Activated T-helper 2 cell treated with anti-CD3 and anti-CD28 coated beads, Interferon-gamma antibody, Interleukin-2, Interleukin-4, amounts not matched to agents 10 μg/mL and 5 μg/mL and 100 μg/mL, durations not matched to agents 14 hours and 24 hours and 36 hours (primary cell): ENCODE measurements at regions of chr6 and their contacts with region 1.

Region 1: DNA sequence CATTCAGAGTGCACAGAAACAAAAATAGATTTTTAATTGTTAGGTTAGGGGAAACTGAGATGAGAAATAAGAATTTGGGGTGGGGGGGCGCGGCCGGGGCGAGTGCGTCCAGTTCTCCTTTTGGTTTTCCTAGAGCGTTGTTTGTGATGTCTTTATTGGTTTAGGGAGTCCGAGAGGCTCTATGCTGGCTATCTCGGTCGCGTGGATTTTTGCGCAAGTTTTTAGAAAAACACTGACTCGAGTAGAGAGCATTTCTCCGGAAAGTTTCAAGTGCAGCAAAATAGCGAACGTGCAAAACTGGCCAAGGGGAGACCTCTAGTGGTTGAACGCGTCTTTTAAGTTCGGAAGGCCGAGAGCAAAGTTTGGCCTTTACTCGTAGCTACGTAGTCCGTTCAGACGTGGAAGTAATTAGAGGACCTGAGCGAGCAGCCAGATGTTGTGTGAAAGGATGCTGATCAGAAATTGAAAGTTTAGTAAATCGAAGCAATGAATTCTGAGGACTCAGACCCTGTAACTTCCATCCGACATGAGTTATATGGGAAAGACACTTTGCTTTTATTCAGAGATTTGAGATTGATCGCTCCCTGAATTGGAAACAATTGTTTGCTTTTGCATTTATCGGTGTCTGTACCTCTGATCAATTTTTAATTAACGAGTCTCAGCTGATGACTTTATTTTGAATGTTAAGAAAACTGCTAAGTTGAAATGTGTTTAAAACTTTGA is 2.7 kb downstream of the L3MBTL3 start:
- DNase-seq: peak; percentile 72
- H3K4me3 Mint-ChIP-seq: peak overlapping the region; percentile 93
- H3K27ac Mint-ChIP-seq: peak overlapping the region; percentile 91
- H3K4me1 Mint-ChIP-seq: peaks cover 12% of the 10 kb centered on the region
- H3K27me3 Mint-ChIP-seq: peaks cover 14% of the 10 kb centered on the region

Region 2: DNA sequence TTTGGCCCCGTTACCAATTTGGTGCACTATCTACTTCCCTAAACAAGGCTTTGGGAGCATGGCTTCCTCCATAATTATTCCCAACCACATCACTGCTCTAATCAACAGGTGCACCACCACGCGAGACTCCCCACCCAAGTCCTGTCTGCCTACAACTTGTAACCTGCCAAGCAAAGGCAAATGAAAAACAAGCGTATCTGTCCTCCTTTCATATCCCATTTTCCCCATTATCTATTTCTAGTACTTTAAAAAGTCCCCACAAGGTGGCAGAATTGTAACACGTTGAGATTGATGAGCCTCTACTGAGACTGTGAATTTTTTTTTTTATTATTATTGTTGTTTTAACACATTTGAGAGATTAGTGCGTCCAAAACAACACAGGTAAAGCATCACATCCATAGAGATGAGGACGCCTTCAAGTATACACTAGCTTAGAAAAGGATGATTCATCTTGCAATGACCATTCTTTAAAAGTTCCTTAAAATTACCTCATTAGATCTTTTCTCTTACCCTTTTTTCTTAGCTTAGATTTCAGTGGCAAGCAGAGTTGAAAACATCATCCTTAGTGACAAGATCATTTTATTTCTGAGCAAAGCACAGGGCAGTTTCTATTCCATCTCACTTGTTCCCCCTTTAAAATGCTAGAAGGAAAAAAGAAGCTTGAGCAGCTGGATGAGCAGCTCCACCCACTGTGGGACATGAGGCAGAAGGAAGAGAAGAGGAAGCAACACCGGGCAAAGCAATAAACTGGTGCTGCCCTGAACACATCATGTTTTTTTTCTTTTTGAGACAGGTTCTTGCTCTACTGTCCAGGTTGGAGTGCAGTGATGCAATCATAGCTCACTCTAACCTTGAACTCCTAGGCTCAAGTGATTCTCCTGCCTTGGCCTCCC is 521.9 kb before region 1 on chr6:
- intact Hi-C with region 1: loop called (anchors 2 kb)
- DNase-seq: no peak
- H3K4me3 Mint-ChIP-seq: peak overlapping the region; percentile 36
- H3K27ac Mint-ChIP-seq: peak overlapping the region; percentile 0
- H3K4me1 Mint-ChIP-seq: peaks cover 48% of the 10 kb centered on the region
- H3K27me3 Mint-ChIP-seq: no peaks in the 10 kb centered on the region

Region 3: GRCh38 chr6:129730477-129731165 is 290.4 kb before region 1 on chr6:
- intact Hi-C with region 1: loop called (anchors 1 kb)
- DNase-seq: no peak
- H3K4me3 Mint-ChIP-seq: no peak overlapping the region
- H3K27ac Mint-ChIP-seq: peak overlapping the region; percentile 8
- H3K4me1 Mint-ChIP-seq: peaks cover 19% of the 10 kb centered on the region
- H3K27me3 Mint-ChIP-seq: no peaks in the 10 kb centered on the region

Region 4: DNA sequence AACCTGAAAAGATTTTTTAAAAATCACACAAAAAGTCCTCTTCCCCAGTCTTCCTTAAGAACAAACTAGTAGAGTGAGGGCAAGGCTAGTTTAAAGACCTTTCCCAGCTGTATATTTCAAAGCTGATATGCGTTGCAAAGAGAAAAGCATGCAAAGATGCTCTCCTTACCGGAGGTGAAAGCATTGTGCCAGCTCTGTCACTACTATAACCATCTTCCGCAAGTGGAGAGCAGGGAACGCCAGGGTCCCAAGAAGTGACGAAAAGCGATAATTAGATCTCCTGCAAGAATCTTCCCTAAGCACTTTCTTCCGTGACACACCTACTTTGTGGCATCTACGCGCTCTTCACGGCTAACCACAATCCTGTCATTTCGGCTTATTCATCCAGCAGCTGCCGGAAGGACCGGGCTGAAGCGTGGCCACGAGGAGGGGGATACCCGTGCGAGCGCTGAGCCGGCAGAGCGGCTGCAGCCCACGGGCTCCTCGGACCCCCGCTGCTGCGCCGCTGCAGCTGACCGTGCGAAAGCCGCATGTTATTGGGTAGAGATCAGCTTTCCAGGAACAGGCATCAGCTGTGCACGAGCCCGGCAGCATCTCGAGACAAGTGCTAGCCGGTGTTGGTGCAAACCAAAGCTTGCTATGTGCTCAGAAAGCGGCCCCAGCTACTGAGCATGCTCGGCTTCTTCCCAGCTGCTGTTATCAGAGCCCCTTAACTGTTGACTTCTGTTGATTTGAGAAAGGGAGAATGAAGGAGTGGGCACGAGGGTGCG is 253.9 kb before region 1 on chr6:
- intact Hi-C with region 1: loop called (anchors 5 kb)
- DNase-seq: peak; percentile 68
- H3K4me3 Mint-ChIP-seq: peak overlapping the region; percentile 81
- H3K27ac Mint-ChIP-seq: no peak overlapping the region
- H3K4me1 Mint-ChIP-seq: peaks cover 27% of the 10 kb centered on the region
- H3K27me3 Mint-ChIP-seq: peaks cover 64% of the 10 kb centered on the region

Region 5: DNA sequence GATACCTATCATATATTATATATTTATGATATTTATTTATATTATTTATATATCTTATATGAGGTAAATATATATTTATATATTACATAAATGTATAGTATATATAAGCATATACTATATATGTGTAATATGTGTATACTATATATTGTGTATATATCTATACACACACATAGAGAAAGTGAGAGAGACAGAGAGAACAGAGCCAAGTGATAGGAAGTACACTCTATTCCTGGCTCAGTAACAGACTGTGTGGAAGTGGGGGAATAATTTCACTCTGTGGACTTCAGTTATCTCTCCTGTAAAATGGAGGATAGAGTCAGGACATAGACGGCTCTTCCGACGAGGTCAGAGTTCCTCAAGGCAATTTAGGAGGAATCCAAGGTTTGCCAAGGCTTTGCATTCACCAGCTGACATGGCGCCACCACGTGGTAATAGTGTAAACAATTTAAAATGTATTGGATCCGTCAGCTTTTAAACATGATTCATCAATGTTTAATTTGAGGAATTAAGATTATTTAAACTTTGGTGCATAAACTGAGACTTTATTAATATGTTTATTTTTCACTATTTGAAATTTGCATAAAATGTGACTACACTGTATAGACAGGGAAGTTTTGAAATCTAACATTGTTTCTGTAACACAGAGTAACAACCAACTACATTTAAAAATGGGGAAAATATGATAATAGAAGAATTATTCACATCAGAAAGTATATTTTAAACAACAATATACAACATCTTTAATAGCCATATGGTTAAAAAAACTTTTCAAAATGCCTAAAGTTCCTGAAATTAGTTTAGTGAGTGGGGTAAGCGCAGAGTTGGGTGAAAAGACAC is 84.5 kb before region 1 on chr6:
- intact Hi-C with region 1: loop called (anchors 5 kb)
- DNase-seq: no peak
- H3K4me3 Mint-ChIP-seq: no peak overlapping the region
- H3K27ac Mint-ChIP-seq: no peak overlapping the region
- H3K4me1 Mint-ChIP-seq: peaks cover 2% of the 10 kb centered on the region
- H3K27me3 Mint-ChIP-seq: peaks cover 27% of the 10 kb centered on the region

Region 6: DNA sequence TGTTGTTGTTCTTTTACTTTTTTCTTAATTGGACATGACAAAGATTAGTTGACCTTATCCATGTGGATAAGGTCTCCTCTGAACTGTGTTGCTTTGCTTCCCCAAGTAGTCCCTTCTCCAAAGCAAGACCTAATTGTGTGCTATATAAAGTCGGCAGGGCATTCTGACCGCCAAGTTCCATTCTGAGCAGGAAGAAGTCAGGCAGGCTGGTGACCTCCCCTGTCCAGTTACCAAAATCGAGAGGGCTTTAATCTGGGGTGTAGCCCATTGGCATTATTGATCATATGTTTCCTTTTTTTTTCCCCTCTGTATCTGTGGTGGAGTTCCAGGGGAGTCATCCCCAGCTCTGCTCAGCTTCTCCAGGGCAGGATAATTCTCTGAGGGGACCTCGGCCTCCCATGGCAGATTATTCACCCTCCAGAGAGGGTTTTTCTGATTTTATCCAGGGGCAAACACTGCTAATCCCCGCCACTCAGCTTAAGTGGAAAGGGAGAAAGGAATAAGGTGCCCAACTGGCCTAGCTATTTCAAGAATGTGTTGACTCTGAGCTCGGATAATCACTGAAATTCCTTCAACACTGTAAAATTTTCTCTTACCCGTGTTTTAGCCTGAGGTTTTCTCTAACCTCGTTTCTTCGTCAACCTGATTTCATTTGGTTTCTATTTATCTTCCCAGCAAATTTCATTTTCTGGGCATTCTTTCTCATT is 74.5 kb before region 1 on chr6:
- intact Hi-C with region 1: no loop called
- DNase-seq: no peak
- H3K4me3 Mint-ChIP-seq: no peak overlapping the region
- H3K27ac Mint-ChIP-seq: no peak overlapping the region
- H3K4me1 Mint-ChIP-seq: no peaks in the 10 kb centered on the region
- H3K27me3 Mint-ChIP-seq: peaks cover 22% of the 10 kb centered on the region

Region 7: DNA sequence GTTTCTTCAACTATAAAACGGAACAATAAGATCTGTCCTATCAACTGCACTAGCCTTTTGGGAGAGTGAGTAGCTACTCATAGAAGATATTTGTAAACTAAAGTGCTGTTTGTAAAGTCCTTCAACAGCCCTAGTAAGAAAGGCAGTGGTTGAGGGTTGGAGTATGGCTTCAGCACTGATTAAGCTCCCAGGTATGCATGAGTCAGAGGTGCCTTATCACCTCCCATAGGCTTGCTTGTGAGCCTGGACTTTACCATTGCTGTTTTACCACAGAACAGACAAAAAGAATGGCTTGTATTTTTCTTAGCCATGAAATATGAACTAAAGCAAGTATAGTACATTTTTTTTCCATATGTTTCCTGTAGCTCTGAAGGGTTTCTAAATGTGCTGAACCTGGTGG is 157.6 kb after region 1 on chr6:
- intact Hi-C with region 1: no loop called
- DNase-seq: no peak
- H3K4me3 Mint-ChIP-seq: no peak overlapping the region
- H3K27ac Mint-ChIP-seq: no peak overlapping the region
- H3K4me1 Mint-ChIP-seq: peaks cover 27% of the 10 kb centered on the region
- H3K27me3 Mint-ChIP-seq: no peaks in the 10 kb centered on the region

Region 8: DNA sequence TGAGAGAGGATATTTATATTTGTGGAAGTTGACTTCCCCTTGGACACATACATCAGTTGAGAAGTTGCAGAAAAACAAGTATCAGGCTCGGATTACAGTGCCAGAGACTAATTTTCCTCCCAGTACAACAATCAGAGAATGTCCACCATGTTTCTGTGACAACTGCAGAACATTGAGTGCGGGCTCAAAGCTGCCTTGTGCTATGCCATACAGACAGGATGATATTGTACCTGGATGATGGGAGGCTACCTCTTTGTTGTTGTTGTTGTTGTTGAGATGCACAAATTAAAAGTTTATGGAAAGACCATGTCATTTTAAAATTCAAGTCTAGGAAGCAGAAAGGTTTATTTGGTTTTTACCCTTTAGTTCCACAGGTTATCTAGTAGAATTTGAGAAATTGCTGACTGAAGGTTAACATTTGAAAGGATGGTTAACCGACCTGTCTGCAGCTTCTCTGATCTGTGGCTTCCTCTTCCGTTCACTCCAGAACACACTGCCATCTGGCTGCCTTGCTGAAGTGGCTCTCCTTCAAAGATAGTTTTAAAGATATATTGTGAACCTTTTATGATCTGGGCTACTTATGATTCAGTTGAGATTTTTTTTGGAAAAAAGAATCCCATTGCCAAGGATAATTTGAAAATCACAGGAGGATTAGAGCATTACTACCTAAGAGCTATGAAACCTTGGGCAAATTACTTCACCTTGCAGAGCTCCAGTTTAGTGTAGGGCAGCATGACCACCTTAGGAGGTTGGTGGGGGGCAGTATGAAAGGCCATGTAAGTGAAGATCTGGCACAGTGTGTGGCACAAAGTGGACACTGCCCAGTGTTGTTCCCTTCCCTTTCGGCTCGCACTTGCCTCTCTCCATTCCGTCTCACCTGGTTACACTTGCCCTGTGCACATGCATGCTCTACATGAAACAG is 360.7 kb after region 1 on chr6:
- intact Hi-C with region 1: no loop called
- DNase-seq: peak; percentile 20
- H3K4me3 Mint-ChIP-seq: no peak overlapping the region
- H3K27ac Mint-ChIP-seq: peak overlapping the region; percentile 13
- H3K4me1 Mint-ChIP-seq: peaks cover 23% of the 10 kb centered on the region
- H3K27me3 Mint-ChIP-seq: peaks cover 12% of the 10 kb centered on the region